Activated T-helper 1 cell treated with anti-CD3 and anti-CD28 coated beads, Interleukin-12 subunit alpha, Interleukin-12 subunit beta, Interleukin-2, Interleukin-4 antibody, amounts not matched to agents 30 ng/mL and 10 ng/mL and 1 ng/mL, durations not matched to agents 14 hours and 24 hours and 36 hours (primary cell): ENCODE measurements at regions of chr21 and their contacts with region 1.

Region 1: DNA sequence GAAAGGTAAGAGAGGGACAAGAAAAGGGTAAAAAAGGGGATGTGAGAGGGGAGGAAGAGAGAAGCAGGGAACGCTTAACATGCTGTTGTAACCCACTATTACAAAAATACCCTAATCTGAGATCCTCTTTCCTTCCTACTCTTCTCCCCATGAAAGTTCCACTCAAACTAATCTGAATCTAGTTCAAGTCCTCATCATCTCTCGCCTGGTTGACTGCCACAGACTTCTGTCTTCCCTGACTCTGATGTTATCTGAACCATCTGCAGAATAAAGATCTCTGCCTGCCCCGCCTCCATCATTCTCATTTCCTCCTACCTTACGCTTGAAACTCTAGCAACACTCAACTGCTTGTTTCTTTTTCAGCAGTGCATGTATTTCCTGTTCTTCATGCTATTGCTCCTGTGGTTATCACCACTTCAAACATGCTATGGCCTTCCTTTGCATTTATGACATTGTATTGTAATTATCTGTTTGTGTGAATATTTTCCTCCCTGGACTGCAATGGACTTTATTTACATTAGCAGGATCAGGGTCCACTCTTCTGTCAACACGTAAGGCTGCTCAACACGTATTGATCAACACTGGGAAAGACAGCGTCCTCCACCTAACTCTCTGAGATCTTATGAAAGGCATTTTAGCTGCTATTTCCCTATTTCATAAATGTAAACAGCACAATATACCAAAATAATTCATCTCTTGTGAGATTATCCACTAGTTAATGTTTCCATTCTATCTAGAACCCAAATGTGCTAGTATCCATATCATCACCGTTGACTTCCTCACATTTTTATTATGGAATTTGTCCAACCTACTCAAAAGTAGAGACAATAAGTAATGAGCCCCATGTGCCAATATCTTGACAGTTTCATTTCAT is 215.5 kb upstream of the USP25 start:
- DNase-seq: peak; percentile 57
- H3K4me3 Mint-ChIP-seq: peak overlapping the region; percentile 21
- H3K27ac Mint-ChIP-seq: peak overlapping the region; percentile 69
- H3K4me1 Mint-ChIP-seq: peaks cover 21% of the 10 kb centered on the region
- H3K27me3 Mint-ChIP-seq: no peaks in the 10 kb centered on the region

Region 2: DNA sequence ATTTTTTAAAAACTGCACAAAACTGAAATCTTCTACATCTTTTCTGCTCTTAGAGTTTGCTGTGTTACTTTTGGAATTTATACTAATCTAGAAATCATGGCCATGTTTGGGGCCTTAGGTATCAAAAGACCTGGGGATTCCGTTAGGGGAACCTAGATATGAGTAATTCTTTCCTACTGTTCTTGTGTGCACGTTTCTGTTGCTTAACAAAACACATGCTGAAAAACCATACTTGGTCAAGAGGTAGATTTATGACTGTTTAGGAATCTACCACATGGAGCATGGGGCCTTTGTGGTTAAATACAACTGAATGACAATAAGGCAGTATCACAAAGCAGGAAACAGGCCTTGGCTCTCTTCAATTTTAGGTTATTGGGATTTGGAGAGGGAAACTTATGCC is 76.4 kb before region 1 on chr21:
- intact Hi-C with region 1: loop called (anchors 2 kb)
- DNase-seq: no peak
- H3K4me3 Mint-ChIP-seq: no peak overlapping the region
- H3K27ac Mint-ChIP-seq: peak overlapping the region; percentile 34
- H3K4me1 Mint-ChIP-seq: peaks cover 12% of the 10 kb centered on the region
- H3K27me3 Mint-ChIP-seq: no peaks in the 10 kb centered on the region

Region 3: DNA sequence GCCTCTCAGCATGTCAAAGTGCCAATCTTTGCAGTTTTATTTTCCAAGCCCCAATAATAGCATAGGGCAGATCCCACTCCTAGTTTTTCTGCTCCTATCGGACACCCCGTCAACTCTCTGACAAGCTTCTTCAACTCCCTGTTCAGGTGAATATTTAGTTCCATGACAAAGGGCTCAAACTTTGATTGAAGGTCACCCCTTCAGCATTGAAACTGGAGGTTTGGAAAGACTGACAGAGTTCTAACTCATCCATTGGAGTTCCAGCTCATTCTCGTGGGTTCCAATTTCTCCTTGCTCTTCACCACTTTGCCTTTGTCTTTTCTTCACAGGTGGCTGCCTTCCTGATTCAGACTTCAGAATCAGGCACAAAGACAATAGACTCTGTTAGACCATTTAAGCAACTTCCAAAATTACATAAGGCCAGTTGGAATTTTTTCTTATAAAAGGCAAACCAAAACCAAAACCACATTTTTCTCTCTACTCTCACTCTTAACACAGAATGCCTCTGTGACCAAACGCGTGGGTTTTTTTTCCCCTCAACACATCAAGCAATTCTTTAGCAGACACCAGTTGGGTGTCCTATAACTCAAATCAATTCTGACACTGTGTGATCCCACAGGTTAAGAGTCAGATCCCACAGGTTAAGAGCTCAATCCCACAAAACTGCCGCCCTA is 46.2 kb after region 1 on chr21:
- intact Hi-C with region 1: loop called (anchors 5 kb)
- DNase-seq: no peak
- H3K4me3 Mint-ChIP-seq: no peak overlapping the region
- H3K27ac Mint-ChIP-seq: no peak overlapping the region
- H3K4me1 Mint-ChIP-seq: peaks cover 10% of the 10 kb centered on the region
- H3K27me3 Mint-ChIP-seq: peaks cover 2% of the 10 kb centered on the region